Ascending aorta (tissue), 2 donors: ENCODE measurements at regions of chr16 and their contacts with region 1.

Region 1: DNA sequence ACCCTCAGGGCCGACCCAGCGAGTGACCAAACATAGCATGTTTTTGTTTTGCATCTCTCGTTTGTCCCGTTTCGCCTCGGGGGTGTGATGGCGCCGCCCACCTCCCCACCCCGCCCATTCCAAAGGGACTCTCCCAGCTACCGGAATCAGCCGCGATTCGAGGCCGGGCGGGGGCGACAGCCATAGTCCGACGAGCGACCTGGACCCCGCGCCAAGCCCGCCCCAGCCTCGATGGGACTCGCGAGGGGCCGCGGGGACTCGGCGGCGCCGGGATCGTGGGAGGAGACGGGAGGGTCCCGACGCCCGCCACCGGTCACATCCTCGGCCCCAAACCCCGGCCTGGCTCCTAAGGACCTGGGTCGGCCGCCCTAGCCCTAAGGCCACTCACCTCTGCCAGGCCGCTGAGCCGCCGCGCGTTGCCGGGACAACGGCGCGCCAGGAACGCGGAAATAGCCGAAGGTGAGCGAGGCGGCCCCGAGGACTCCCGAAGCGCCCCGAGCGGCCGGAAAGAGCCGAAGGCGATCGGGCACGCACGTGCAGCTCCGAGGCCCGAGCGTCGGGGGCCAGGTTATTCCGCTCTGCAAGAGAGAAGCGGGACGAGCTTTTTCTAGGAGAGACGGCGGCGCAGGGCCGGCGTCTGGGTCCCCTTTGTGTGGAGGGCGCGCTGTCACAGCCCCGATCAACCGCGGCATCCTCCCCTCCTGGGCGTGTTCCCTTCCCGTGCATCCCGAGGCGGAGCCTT is 1.4 kb downstream of the IFT140 start:
- DNase-seq: peak; percentile 30 to 94
- H3K4me3 ChIP-seq: peak overlapping the region; percentile 63 to 83
- H3K27ac ChIP-seq: peak overlapping the region; percentile 73 to 84
- H3K4me1 ChIP-seq: peaks cover 22 to 24% of the 10 kb centered on the region in 2 donors
- H3K27me3 ChIP-seq: no peaks in the 10 kb centered on the region
- CTCF ChIP-seq: no peak

Region 2: GRCh38 chr16:636206-637080 is 974.0 kb before region 1 on chr16 and contains the start of gene METTL26:
- intact Hi-C with region 1: loop called (anchors 5 kb)
- DNase-seq: peak; percentile 80 to 98
- H3K4me3 ChIP-seq: peak within 1 kb of the TSS; percentile 81 to 97
- H3K27ac ChIP-seq: peak within 1 kb of the TSS; percentile 94 to 99
- H3K4me1 ChIP-seq: peaks cover 6 to 18% of the 10 kb centered on the region in 2 donors
- H3K27me3 ChIP-seq: no peaks in the 10 kb centered on the region
- CTCF ChIP-seq: peak in 1 of 3 experiments; percentile 12
- total RNA-seq, gene METTL26: 523 TPM

Region 3: GRCh38 chr16:1420111-1420540 is 190.3 kb before region 1 on chr16:
- intact Hi-C with region 1: loop called (anchors 1 kb)
- DNase-seq: no peak
- H3K4me3 ChIP-seq: peak overlapping the region; percentile 65 to 70
- H3K27ac ChIP-seq: peak overlapping the region; percentile 93
- H3K4me1 ChIP-seq: peaks cover 7 to 16% of the 10 kb centered on the region in 2 donors
- H3K27me3 ChIP-seq: no peaks in the 10 kb centered on the region
- CTCF ChIP-seq: no peak

Region 4: DNA sequence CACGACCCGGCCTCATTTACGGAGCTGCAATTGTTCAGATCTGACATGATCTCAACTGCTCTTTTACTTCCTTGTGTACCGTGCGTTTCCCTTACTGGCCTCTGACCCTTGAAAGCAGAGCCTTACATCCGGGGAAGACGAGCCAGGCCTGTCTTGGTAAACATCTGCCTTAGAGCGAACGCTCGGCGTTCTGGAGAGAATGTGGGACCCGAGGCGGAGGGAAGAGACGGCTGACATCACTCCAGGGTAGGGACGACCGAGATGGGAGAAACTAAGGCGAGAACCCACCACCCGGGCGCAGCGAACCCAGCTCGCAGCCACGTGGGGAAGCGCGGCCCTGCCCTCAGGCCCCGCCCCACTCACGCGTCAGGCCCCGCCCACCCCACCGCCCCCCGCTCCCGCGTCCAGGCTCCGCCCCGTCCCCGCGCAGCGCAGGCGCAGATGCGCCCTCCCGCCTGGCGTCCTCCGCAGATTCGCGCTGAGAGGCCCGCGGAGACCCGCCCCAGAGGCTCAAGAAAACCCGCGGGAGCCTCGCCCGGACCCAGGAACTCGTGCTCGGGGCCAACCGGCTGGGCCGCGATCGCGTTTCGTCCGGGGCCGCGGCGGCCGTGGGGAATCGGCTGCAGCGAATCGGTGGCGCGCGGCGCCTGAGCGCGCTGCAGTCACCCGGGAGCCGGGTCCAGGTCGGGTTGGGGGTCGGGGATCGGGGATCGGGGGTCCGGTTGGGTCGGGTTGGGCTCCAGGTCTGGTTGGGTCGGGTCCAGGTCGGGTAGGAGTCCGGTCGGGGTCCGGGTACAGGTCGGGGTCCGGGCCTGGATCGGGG is 117.3 kb before region 1 on chr16 and contains the start of gene TELO2:
- intact Hi-C with region 1: loop called (anchors 2 kb)
- DNase-seq: peak in 1 of 2 donors; percentile 81
- H3K4me3 ChIP-seq: peak within 1 kb of the TSS; percentile 78 to 93
- H3K27ac ChIP-seq: peak within 1 kb of the TSS; percentile 76 to 93
- H3K4me1 ChIP-seq: peaks cover 3 to 9% of the 10 kb centered on the region in 2 donors
- H3K27me3 ChIP-seq: no peaks in the 10 kb centered on the region
- CTCF ChIP-seq: no peak
- total RNA-seq, gene TELO2: 110 TPM

Region 5: DNA sequence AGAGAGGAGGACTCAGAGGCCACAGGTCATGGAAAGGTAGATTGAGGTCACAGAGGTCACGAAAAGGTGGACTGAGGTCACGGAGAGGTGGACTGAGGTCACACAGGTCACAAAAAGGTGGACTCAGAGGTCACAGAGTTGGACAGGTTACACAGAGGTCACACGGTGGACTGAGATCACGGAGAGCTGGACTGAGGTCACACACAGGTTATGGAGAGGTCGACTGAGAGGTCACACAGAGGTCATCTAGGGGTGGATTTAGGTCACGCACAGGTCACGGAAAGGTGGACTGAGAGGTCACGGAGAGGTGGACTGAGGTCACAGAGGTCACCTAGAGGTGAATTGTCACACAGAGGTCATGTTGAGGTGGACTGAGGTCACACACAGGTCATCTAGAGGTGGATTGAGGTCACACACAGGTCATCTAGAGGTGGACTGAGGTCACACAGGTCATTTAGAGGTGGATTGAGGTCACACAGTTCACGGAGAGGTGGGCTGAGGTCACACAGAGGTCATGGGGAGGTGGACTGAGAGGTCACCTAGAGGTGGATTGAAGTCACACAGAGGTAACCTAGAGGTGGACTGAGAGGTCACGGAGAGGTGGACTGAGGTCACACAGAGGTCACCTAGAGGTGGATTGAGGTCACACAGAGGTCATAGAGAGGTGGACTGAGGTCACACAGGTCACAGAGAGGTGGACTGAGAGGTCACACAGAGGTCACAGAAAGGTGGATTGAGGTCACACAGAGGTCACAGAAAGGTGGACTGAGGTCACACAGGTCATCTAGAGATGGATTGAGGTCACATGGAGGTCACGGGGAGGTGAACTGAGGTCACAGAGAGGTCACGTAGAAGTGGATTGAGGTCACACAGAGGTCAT is 40.9 kb after region 1 on chr16:
- intact Hi-C with region 1: no loop called
- DNase-seq: no peak
- H3K4me3 ChIP-seq: no peak overlapping the region
- H3K27ac ChIP-seq: no peak overlapping the region
- H3K4me1 ChIP-seq: no peaks in the 10 kb centered on the region
- H3K27me3 ChIP-seq: no peaks in the 10 kb centered on the region
- CTCF ChIP-seq: no peak

Region 6: DNA sequence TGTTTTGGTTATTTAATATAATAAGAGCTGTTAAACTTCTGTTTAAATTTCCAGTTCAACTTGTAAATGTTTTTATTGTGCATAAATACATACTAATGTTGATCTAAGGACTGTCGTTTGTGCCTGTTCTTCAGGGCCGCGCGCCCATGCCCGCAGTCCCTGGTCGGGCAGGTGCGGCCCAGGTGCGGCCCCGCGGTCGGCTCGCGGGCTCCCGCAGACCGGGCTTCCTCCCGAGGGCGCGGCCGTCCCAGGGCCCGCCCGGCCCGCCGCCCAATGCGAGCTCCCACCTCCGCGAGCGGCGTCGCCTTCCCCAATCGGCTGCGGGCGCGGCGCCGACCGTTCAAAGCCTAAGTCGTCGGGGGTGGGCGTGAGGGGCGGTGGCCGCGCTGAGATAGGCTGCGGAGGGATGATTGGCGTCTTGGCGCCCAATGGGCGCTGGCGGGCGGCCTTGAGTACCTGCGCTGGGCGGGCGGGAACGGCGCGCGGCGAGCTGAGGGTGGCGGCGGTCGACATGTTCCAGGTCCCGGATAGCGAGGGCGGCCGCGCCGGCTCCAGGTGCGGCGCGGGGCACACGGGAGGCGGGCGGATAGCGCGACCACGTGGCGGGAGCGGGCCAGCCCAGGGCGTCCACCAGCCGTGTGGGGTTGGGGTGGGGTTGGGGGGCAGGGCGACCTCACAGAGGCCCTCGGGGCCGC is 67.5 kb after region 1 on chr16 and contains the start of gene JPT2:
- intact Hi-C with region 1: loop called (anchors 1 kb)
- DNase-seq: peak; percentile 85 to 97
- H3K4me3 ChIP-seq: peak within 1 kb of the TSS; percentile 70 to 90
- H3K27ac ChIP-seq: peak within 1 kb of the TSS; percentile 35 to 59
- H3K4me1 ChIP-seq: peaks cover 0 to 3% of the 10 kb centered on the region in 2 donors
- H3K27me3 ChIP-seq: no peaks in the 10 kb centered on the region
- CTCF ChIP-seq: no peak
- total RNA-seq, gene JPT2: 18.3 TPM

Region 7: GRCh38 chr16:1688807-1689563 is 78.5 kb after region 1 on chr16:
- intact Hi-C with region 1: no loop called
- DNase-seq: peak; percentile 39 to 79
- H3K4me3 ChIP-seq: no peak overlapping the region
- H3K27ac ChIP-seq: peak overlapping the region; percentile 75 to 76
- H3K4me1 ChIP-seq: peaks cover 0 to 9% of the 10 kb centered on the region in 2 donors
- H3K27me3 ChIP-seq: no peaks in the 10 kb centered on the region
- CTCF ChIP-seq: no peak

Region 8: DNA sequence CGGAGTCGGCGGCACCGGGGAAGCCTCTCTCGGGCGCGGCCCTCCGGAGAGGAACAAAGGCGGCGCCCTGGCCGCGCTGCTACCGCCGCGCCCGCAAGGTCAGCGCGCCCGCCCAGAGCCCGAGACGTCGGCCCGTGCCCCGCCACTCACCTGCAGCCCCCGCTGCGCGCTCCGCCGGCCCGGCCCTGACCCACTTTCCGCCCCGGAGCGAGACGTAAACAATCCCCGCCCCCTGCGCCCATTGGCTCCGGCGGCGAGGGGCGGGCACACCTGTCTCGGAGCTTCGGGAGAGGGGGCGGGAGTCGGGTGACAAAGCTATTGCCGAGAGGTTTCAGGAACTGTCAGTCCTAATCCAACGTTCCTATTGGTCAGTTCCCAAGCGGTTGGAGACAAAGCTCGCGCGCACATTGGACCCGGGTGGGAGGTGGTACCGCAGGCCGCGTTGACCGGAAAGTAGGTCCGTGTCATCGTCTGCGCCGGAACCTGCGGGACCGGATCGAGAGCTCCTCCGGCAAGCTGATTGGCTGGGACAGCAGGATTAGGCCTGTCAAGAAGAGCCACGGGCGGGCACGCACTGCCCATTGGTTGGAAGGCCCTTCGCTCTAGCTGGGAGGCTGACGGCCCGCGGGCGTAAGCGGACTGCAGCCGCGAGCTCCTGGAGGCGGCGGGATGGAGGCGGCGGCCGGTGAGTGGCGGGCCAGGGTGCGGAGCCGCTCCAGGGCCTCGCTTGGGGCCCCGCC is 172.1 kb after region 1 on chr16 and contains the starts of genes NUBP2 and SPSB3:
- intact Hi-C with region 1: loop called (anchors 5 kb)
- DNase-seq: peak; percentile 99 to 100
- H3K4me3 ChIP-seq: peak within 1 kb of the TSS; percentile 84 to 99
- H3K27ac ChIP-seq: peak within 1 kb of the TSS; percentile 77 to 83
- H3K4me1 ChIP-seq: peaks cover 11 to 26% of the 10 kb centered on the region in 2 donors
- H3K27me3 ChIP-seq: no peaks in the 10 kb centered on the region
- CTCF ChIP-seq: no peak
- total RNA-seq, gene NUBP2: 182 TPM
- total RNA-seq, gene SPSB3: 159 TPM

Region 9: DNA sequence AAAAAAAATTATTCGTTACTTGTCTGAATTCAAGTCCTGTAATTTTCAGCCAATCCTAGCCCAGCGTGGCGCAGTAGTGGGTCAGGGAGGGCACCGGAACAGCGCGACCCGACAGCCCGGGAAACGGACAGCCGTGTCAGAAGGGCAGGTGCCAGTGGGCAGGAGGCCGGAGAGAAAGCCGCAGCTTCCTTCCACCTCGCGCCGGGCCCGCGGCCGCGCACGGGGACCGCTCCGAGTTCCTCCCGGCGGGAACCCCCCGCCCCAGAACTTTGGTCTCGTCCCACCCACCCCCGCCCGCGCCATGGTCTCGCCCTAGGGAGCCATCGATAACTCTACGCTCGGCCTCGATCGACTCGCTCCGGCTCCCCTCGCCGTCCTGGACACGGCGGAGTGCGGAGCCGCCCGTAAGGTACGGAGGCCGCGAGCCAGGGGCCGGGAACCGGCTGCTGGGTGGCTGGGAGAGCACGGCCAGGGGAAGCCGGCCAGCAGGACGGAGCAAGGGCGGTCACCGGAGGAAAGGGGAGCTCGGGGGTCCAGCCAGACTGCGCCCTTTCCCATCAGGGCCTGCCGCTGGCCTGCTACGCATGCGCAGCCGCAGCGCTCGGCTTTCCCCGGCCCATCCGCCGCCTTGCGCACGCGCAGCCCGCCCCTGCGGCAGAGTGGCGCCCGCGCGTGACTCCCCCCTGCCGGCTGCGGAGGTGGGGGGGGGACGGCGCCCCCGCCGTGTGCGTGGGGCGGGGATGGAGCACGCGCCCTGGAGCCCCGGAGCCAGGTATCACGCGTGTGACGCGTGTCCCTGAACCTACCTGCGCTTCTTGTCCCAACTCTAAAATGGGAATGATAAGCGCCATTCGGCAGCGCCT is 594.9 kb after region 1 on chr16 and contains the start of gene MLST8:
- intact Hi-C with region 1: loop called (anchors 5 kb)
- DNase-seq: peak; percentile 25 to 90
- H3K4me3 ChIP-seq: peak within 1 kb of the TSS; percentile 80 to 97
- H3K27ac ChIP-seq: peak within 1 kb of the TSS; percentile 96 to 98
- H3K4me1 ChIP-seq: peaks cover 4 to 11% of the 10 kb centered on the region in 2 donors
- H3K27me3 ChIP-seq: no peaks in the 10 kb centered on the region
- CTCF ChIP-seq: peak in 2 of 3 experiments; percentile 6 to 10
- total RNA-seq, gene MLST8: 23.7 TPM